Activated naive CD4-positive, alpha-beta T cell treated with anti-CD3 and anti-CD28 coated beads, Interleukin-2, amount 10 ng/mL, durations not matched to agents 7 days and 5 days (primary cell): ENCODE measurements at regions of chr7 and their contacts with region 1.

Region 1: DNA sequence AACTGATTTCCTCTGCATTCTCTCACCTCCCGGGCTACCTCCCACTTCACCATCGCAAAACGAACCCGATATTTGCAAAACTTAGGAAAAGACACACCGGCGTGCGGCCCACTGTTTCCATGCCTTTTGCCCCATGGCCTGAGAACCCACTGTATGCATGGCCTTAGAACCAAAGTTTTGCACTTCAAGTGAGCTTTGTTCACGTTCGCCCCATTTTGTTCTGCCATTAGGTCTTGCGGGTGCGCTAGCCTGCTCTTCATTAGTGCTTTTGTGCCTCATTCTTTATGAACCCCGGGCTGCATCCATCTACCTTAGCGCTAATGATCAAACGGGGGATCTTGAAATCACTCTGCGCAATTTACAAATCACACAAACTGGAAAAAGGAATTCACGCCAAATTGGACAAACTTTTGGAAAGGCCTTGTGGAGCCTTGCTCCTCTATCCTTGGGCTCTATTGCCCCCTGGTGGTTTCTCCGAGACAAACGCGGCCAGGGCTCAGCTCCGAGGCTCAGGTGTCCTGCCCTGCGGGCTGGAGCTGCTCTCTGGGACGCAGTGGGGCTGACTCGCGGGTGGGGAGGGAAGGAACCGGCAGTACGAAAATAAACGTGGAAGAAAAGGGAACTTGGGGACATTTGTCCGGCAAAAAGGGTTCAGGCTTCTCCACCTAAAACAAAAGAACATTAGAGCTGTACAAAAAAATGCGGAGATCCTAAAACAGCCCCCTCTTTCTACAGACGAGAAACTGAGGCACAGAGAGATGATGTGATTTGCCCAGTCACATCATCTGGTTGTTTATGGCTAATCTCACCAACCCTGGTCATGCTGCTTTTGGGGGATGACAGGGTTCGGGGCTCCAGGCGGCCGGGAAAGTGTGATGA is 300.4 kb upstream of the NFE2L3 start:
- DNase-seq: peak; percentile 76
- H3K4me3 Mint-ChIP-seq: peak overlapping the region; percentile 59
- H3K27ac Mint-ChIP-seq: peak overlapping the region; percentile 62
- H3K4me1 Mint-ChIP-seq: peaks cover 26% of the 10 kb centered on the region
- H3K27me3 Mint-ChIP-seq: peaks cover 60% of the 10 kb centered on the region

Region 2: DNA sequence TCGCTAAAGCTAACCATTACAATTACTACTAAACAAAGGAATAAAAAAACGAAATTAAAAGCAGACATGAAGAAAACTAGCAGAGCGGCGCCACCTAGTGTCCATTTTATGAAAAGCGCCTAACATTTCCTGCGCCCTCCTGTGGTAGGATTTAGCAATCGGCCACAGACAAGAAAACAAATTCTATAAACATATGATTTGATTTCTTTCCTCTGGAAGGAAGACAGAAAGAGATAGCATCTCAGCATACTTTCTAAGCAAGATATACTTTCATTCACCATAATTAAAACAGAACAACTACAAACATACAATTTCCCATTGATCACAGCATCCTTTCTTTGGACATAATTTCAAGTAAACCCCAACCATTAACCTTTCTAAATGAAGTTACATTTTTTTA is 285.6 kb before region 1 on chr7:
- CTCF ChIA-PET with region 1: interaction called, 14 read pairs
- DNase-seq: peak; percentile 70
- H3K4me3 Mint-ChIP-seq: no peak overlapping the region
- H3K27ac Mint-ChIP-seq: peak overlapping the region; percentile 25
- H3K4me1 Mint-ChIP-seq: peaks cover 2% of the 10 kb centered on the region
- H3K27me3 Mint-ChIP-seq: peaks cover 4% of the 10 kb centered on the region